IMR-90 (cell line): ENCODE measurements at regions of chr17 and their contacts with region 1.

Region 1: DNA sequence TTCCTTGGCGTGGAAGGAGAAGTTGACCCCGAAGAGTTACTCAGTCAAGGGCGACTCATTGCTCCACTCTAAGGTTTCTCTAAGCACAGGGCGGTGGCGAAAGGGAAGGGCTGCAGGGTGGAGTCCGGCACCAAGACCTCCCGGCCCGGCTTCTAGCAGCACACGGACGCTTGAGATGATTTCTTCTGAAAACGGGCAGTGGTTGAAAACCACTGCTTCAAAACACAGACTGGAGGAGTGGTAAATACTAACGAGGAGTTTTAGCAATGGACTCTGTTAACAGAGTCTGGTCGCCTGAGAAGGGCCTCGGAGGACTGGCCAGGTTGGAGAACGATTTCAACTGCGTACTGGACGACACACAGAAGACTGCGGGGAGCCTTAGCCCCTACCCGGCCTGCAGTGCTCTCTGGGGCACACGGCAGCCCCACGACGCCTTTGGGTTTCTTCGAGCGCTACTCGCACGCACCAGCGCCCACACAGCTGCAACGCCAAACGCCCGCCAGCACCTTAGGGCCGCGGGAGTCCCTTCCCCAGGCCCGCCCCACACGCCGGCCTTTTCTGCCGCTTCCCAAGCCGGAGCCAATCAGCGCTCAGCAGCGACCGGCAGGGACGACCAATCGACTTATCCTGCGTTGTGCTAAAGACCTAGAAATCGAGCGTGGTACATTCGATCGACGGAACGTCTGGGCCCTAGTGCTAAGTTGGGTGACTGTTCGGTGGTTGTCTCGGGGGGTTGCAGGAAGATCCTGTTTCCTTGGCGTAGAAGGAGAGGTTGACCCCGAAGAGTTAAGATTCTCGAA is 14.4 kb upstream of the CA4 start:
- DNase-seq: peak; percentile 90
- ATAC-seq: peak; percentile 97
- H3K4me3 ChIP-seq: peak overlapping the region; percentile 59
- H3K27ac ChIP-seq: peak overlapping the region; percentile 25
- H3K4me1 ChIP-seq: no peaks in the 10 kb centered on the region
- H3K27me3 ChIP-seq: peaks cover 21% of the 10 kb centered on the region
- CTCF ChIP-seq: no peak
- POLR2A ChIP-seq: peak; percentile 74
- RAD21 ChIP-seq: no peak

Region 2: GRCh38 chr17:60089096-60089806 is 46.1 kb before region 1 on chr17:
- CTCF ChIA-PET with region 1: no interaction called
- POLR2A ChIA-PET with region 1: no interaction called
- dilution Hi-C with region 1: no loop called
- in situ Hi-C with region 1: no loop called
- intact Hi-C with region 1: no loop called
- DNase-seq: no peak
- ATAC-seq: no peak
- H3K4me3 ChIP-seq: no peak overlapping the region
- H3K27ac ChIP-seq: no peak overlapping the region
- H3K4me1 ChIP-seq: peaks cover 22% of the 10 kb centered on the region
- H3K27me3 ChIP-seq: no peaks in the 10 kb centered on the region
- CTCF ChIP-seq: no peak
- POLR2A ChIP-seq: no peak
- RAD21 ChIP-seq: no peak

Region 3: DNA sequence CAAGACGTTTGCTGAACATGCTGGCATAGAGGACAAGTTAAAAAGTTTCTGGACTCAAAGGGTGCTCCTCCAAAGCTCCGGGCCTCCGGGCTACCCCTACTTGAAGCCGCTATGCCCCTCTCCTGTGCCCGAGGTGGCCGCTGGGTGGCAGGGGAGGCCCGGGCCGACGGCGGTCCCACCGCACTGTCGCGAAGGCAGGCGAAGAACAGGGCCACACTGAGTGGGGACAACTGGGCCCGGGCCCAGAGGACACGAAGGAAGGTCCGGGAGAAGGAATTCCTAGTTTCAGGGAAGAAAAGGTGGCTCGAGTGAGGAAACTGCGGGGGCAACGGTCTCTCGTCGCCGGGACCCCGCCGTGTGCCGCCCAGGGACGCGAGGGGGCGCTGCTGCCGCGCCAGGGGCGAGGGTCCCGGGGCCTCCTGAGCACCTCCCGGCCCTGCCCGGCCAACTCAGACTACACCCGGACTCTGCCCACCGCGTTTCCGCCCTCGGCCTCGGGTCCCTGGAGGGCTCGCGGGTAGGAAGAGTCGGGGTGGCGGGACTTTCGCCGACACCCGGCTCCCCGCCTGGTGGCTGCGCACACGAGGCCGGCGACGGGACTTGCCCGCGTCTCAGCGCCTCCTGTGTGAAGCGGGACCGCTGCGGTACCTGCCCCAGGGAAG is 286.1 kb after region 1 on chr17:
- CTCF ChIA-PET with region 1: no interaction called
- POLR2A ChIA-PET with region 1: no interaction called
- dilution Hi-C with region 1: no loop called
- in situ Hi-C with region 1: loop called (anchors 25 kb)
- intact Hi-C with region 1: no loop called
- DNase-seq: peak; percentile 33
- ATAC-seq: peak; percentile 97
- H3K4me3 ChIP-seq: peak overlapping the region; percentile 48
- H3K27ac ChIP-seq: no peak overlapping the region; the same call in 1 of the 2 replicates
- H3K4me1 ChIP-seq: no peaks in the 10 kb centered on the region; the same call in 1 of the 2 replicates
- H3K27me3 ChIP-seq: no peaks in the 10 kb centered on the region; the same call in 1 of the 2 replicates
- CTCF ChIP-seq: peak; percentile 57
- POLR2A ChIP-seq: no peak
- RAD21 ChIP-seq: peak; percentile 38; the same call in 1 of the 2 replicates

Region 4: DNA sequence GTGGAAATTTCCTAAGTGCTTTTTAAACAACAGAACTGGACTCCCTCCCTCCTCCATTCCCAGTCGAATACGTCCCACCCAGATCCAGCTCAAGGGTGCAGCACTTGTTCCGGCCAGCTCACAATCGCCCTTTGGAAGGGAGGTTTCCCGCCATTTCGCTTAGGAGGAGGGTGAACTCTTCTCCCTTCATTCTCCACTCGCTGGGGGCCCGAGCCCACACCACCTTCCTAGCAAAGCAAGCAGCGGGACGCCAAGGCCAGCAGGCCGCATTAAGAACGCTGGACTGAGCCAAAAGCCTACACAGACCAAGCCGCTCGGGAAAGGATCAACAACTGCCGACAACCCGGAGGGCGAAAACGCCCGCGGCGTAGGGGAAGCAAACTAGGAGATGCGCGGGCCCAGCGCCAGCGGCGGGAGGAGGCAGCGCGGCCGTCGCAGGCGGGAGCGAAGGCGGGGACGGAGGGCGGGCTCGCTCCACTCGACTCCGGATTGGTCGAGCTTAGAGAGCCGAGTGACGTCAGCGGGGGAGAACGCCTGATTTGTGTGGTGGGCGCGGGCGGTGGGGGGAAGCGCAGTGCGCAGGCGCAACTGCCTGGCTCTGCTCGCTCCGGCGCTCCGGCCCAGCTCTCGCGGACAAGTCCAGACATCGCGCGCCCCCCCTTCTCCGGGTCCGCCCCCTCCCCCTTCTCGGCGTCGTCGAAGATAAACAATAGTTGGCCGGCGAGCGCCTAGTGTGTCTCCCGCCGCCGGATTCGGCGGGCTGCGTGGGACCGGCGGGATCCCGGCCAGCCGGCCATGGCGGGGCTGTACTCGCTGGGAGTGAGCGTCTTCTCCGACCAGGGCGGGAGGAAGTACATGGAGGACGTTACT is 464.5 kb after region 1 on chr17 and contains the start of gene PPM1D:
- CTCF ChIA-PET with region 1: no interaction called
- POLR2A ChIA-PET with region 1: no interaction called
- dilution Hi-C with region 1: no loop called
- in situ Hi-C with region 1: no loop called
- intact Hi-C with region 1: loop called (anchors 10 kb)
- DNase-seq: peak; percentile 99
- ATAC-seq: peak; percentile 95
- H3K4me3 ChIP-seq: peak within 1 kb of the TSS; percentile 97
- H3K27ac ChIP-seq: peak within 1 kb of the TSS; percentile 93
- H3K4me1 ChIP-seq: peaks cover 2% of the 10 kb centered on the region; the same call in 1 of the 2 replicates
- H3K27me3 ChIP-seq: no peaks in the 10 kb centered on the region
- CTCF ChIP-seq: no peak
- POLR2A ChIP-seq: peak; percentile 82
- RAD21 ChIP-seq: no peak
- total RNA-seq, gene PPM1D: 15.8 and 16.1 TPM in 2 replicates